ENCODE measurements at regions of chrX and their contacts with region 1.

Region 1: GRCh38 chrX:55717521-55718497 is at the start of gene RRAGB:
- DNase-seq: peak; percentile 74
- ATAC-seq: peak; percentile 96
- H3K4me3 Mint-ChIP-seq: peak within 1 kb of the TSS; percentile 89
- H3K27ac Mint-ChIP-seq: peak within 1 kb of the TSS; percentile 93
- H3K4me1 Mint-ChIP-seq: peaks cover 28% of the 10 kb centered on the region
- H3K27me3 Mint-ChIP-seq: no peaks in the 10 kb centered on the region
- CTCF ChIP-seq: no peak
- total RNA-seq, gene RRAGB: 13.2 and 15.3 TPM in 2 replicates

Region 2: GRCh38 chrX:54529552-54530357 is 1188.1 kb before region 1 on chrX and contains the start of gene GNL3L:
- CTCF ChIA-PET with region 1: no interaction called
- POLR2A ChIA-PET with region 1: interaction called, 4 read pairs
- intact Hi-C with region 1: loop called (anchors 2 kb)
- DNase-seq: peak; percentile 66
- ATAC-seq: peak; percentile 83
- H3K4me3 Mint-ChIP-seq: peak within 1 kb of the TSS; percentile 94
- H3K27ac Mint-ChIP-seq: peak within 1 kb of the TSS; percentile 97
- H3K4me1 Mint-ChIP-seq: peaks cover 43% of the 10 kb centered on the region
- H3K27me3 Mint-ChIP-seq: no peaks in the 10 kb centered on the region
- CTCF ChIP-seq: no peak
- total RNA-seq, gene GNL3L: 67.1 and 70.5 TPM in 2 replicates

Region 3: DNA sequence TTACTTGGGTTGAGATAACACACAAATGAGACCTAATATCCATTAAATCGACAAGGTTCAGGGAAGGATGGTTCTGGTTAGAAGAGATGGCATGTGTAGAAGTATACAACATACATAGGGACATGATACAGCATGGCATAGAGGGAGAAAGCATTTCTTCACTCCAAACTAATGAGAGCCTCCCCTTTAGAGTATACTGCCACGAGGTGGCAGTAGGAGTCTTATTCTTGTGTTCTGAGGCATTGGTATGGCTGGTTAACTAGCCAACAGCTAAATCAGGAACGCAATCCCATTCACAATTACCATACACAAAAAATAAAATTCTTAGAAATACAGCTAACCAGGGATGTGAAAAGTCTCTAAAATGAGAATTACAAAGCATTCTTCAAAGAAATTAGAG is 826.2 kb before region 1 on chrX:
- CTCF ChIA-PET with region 1: no interaction called
- POLR2A ChIA-PET with region 1: no interaction called
- intact Hi-C with region 1: loop called (anchors 5 kb)
- DNase-seq: no peak
- ATAC-seq: no peak
- H3K4me3 Mint-ChIP-seq: no peak overlapping the region
- H3K27ac Mint-ChIP-seq: no peak overlapping the region
- H3K4me1 Mint-ChIP-seq: no peaks in the 10 kb centered on the region
- H3K27me3 Mint-ChIP-seq: peaks cover 6% of the 10 kb centered on the region
- CTCF ChIP-seq: no peak

Region 4: GRCh38 chrX:55160685-55161552 is 556.9 kb before region 1 on chrX:
- CTCF ChIA-PET with region 1: no interaction called
- POLR2A ChIA-PET with region 1: interaction called, 3 read pairs
- intact Hi-C with region 1: loop called (anchors 1 kb)
- DNase-seq: peak; percentile 81
- ATAC-seq: peak; percentile 93
- H3K4me3 Mint-ChIP-seq: peak overlapping the region; percentile 89
- H3K27ac Mint-ChIP-seq: peak overlapping the region; percentile 94
- H3K4me1 Mint-ChIP-seq: peaks cover 11% of the 10 kb centered on the region
- H3K27me3 Mint-ChIP-seq: no peaks in the 10 kb centered on the region
- CTCF ChIP-seq: no peak

Region 5: GRCh38 chrX:55640854-55641253 is 77.0 kb before region 1 on chrX:
- CTCF ChIA-PET with region 1: no interaction called
- POLR2A ChIA-PET with region 1: no interaction called
- intact Hi-C with region 1: loop called (anchors 2 kb)
- DNase-seq: no peak
- ATAC-seq: peak; percentile 71
- H3K4me3 Mint-ChIP-seq: no peak overlapping the region
- H3K27ac Mint-ChIP-seq: peak overlapping the region; percentile 18
- H3K4me1 Mint-ChIP-seq: peaks cover 9% of the 10 kb centered on the region
- H3K27me3 Mint-ChIP-seq: no peaks in the 10 kb centered on the region
- CTCF ChIP-seq: no peak

Region 6: DNA sequence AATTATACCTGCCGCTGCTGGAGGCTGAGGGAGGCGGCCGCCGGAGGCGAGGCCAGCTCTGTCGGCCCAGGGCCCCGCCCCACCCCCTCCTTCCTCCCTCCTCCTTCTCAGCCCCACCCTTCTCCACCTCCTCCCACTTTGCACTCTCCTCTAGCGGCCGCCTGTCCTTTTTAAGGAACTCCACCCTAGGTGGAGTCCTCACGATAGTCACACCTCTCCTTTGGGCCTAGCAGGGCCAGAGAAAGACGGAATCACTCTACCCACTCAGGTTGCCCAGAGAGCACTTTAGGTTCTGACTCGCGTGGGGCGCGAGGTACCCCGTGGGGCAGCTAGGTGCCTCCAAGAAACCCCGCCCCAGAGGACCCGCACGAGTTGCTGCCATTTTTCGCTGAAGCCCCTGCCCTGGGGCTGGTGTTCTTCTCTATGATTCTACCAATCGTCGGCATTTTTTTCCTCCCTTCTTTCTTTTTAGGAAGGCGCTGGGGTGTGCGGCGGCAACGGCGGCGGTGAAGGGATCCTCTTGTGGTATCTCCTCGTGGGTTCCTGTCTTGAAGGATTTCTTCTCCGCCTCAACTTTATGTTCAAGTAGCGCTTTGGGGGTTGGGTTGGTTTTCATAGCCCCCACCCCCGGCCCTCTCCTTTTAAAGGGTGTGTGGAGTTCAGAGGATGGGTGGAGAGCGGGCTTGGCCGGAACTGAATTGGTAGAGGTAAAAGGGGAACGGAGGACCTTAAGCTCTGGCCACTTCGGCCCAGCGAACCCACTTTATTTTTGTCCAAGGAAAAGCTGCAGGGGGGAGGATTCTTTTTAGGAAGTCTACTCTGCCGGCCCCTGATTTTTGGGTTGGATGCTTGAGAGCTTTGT is 514.6 kb after region 1 on chrX and contains the start of gene KLF8:
- CTCF ChIA-PET with region 1: interaction called, 4 read pairs
- POLR2A ChIA-PET with region 1: interaction called, 6 read pairs
- intact Hi-C with region 1: loop called (anchors 1 kb)
- DNase-seq: peak; percentile 25
- ATAC-seq: peak; percentile 83
- H3K4me3 Mint-ChIP-seq: peak within 1 kb of the TSS; percentile 88
- H3K27ac Mint-ChIP-seq: peak within 1 kb of the TSS; percentile 83
- H3K4me1 Mint-ChIP-seq: peaks cover 38% of the 10 kb centered on the region
- H3K27me3 Mint-ChIP-seq: no peaks in the 10 kb centered on the region
- CTCF ChIP-seq: no peak
- total RNA-seq, gene KLF8: 15.2 and 17.8 TPM in 2 replicates

Region 7: DNA sequence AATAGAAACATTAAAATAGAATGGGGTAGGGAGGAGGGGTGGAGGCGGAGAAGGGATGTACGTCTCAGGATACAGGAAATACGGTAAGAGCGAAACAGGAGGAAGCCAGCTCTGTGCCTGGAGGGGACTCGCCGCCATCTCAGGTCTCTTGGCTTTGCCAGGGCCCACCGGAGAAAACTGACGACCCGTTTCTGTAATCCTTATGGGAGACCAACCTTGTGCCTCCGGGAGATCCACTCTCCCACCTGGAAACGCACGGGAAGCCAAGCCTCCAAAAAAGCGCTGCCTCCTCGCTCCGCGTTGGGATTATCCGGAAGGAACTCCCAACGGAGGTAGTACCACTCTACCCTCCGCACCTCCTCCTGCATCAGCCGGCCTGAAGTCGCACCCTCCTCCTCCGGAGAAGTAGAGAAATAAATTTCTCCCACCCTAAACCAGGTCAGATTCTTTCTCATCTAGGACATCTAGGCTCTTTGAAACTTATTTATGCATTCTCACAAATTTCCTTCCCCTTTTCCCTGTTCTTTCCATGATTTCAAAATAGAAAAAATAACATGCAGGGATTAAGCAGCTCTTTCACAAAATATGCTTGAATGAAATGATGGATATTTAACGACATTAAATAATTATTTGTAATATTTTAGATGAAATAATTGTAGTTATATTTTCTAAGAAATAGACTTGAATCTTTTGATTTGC is 1011.5 kb after region 1 on chrX and contains the start of gene NBDY:
- CTCF ChIA-PET with region 1: no interaction called
- POLR2A ChIA-PET with region 1: interaction called, 6 read pairs
- intact Hi-C with region 1: loop called (anchors 5 kb)
- DNase-seq: peak; percentile 20
- ATAC-seq: peak; percentile 78
- H3K4me3 Mint-ChIP-seq: peak within 1 kb of the TSS; percentile 94
- H3K27ac Mint-ChIP-seq: peak within 1 kb of the TSS; percentile 92
- H3K4me1 Mint-ChIP-seq: peaks cover 25% of the 10 kb centered on the region
- H3K27me3 Mint-ChIP-seq: no peaks in the 10 kb centered on the region
- CTCF ChIP-seq: no peak
- total RNA-seq, gene NBDY: 30.0 and 41.0 TPM in 2 replicates

Measured in activated B cell treated with CpG ODN at 0.5 μM for 24 hours (primary cell).